Activated B cell treated with CpG ODN at 0.5 μM for 24 hours (primary cell): ENCODE measurements at regions of chr15 and their contacts with region 1.

Region 1: DNA sequence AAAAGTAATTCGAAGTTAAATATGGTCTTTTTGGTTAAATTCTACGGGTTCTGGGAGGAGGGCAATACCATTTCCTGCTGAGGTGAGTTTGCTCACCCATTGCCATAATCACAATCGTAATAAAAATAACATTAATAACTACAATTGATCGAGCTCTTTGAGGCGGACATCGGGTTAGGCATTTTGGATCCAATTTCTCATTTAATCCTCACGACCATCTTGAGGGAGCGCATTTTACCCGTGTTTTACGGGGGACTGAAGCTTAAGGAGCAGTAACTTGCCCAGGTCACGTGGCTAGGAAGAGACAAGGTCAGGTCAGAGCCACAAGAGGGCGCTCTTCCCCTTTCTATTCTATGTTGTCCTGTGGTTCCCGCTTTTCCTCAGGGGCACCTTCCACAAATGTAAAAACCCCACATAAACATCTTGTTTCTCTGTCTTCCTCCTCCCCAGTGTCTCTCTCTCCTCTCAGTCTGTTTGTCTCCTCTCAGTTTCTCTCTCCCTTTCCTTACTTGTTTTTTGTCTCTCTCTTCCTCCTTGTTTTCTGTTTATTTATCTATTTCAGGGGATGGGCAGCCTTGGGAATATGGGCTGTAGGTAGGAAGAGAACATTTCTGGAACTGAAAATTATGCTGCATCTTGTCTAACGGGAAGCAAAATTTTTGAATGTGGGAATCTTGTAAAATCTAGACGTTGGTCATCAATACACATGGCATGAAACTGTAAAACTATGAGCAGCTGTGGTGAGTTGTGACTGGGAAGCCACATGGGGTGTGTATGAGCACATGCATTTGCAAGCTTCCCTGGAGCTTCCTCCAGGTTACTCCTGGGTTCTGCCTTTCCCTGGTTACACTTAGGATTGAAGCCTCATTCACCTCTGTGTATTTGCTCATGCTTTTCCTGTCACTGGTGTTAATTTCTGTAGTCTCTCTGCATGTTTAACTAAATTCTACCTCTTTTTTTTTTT is 71.0 kb downstream of the SQOR start:
- DNase-seq: peak; percentile 32
- ATAC-seq: peak; percentile 82
- H3K4me3 Mint-ChIP-seq: peak overlapping the region; percentile 85
- H3K27ac Mint-ChIP-seq: peak overlapping the region; percentile 50
- H3K4me1 Mint-ChIP-seq: peaks cover 19% of the 10 kb centered on the region
- H3K27me3 Mint-ChIP-seq: peaks cover 11% of the 10 kb centered on the region
- CTCF ChIP-seq: no peak

Region 2: GRCh38 chr15:45634442-45635190 is 71.2 kb before region 1 on chr15 and contains the start of gene SQOR:
- CTCF ChIA-PET with region 1: interaction called, 5 read pairs
- POLR2A ChIA-PET with region 1: interaction called, 3 read pairs
- intact Hi-C with region 1: loop called (anchors 2 kb)
- DNase-seq: no peak
- ATAC-seq: peak; percentile 78
- H3K4me3 Mint-ChIP-seq: peak within 1 kb of the TSS; percentile 96
- H3K27ac Mint-ChIP-seq: peak within 1 kb of the TSS; percentile 94
- H3K4me1 Mint-ChIP-seq: peaks cover 33% of the 10 kb centered on the region
- H3K27me3 Mint-ChIP-seq: no peaks in the 10 kb centered on the region
- CTCF ChIP-seq: no peak
- total RNA-seq, gene SQOR: 39.2 and 44.9 TPM in 2 replicates

Region 3: DNA sequence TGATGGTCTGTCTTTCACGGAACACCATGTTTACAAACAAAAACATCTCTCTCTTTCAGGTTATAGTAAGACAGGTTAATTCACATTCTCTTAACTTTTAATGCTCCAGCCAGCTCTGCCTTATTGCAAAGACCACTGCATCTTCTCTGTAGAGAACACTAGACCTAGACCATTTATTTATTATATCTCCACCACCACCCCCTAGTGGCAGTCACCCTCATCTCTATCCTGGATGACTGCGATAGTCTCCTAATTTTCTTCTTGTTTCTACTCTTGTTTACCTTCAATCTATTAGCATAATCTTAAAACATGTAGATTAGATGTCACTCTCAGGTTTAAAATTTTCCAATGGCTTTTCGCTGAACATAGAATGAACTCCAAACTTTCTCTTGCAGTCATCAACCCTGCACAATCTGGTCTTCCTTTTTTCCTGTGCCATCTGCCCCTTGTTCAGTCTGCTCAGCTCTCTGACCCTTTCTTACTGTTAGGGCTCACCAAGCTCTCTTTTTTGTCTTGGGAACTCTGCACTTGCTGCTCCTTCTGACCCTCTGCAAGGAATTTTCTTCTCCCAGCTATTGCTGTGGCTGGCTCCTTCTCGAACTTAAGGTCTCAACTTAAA is 84.6 kb after region 1 on chr15:
- CTCF ChIA-PET with region 1: interaction called, 7 read pairs
- POLR2A ChIA-PET with region 1: no interaction called
- intact Hi-C with region 1: loop called (anchors 1 kb)
- DNase-seq: no peak
- ATAC-seq: no peak
- H3K4me3 Mint-ChIP-seq: no peak overlapping the region
- H3K27ac Mint-ChIP-seq: no peak overlapping the region
- H3K4me1 Mint-ChIP-seq: no peaks in the 10 kb centered on the region
- H3K27me3 Mint-ChIP-seq: peaks cover 13% of the 10 kb centered on the region
- CTCF ChIP-seq: no peak